ENCODE measurements at regions of chr6 and their contacts with region 1.

Region 1: GRCh38 chr6:26249957-26250697 is 114.9 kb upstream of the BTN3A2 start:
- DNase-seq: peak; percentile 81 to 84
- H3K4me3 ChIP-seq: peak overlapping the region; percentile 97
- H3K4me3 Mint-ChIP-seq: peak overlapping the region; percentile 71
- H3K27ac Mint-ChIP-seq: peak overlapping the region; percentile 71
- H3K4me1 ChIP-seq: peaks cover 10% of the 10 kb centered on the region; the same call in 1 of the 2 replicates
- H3K4me1 Mint-ChIP-seq: peaks cover 13% of the 10 kb centered on the region
- H3K27me3 ChIP-seq: no peaks in the 10 kb centered on the region
- H3K27me3 Mint-ChIP-seq: peaks cover 3% of the 10 kb centered on the region
- CTCF ChIP-seq: peak in 1 of 2 experiments; percentile 42

Region 2: GRCh38 chr6:26031595-26032339 is 218.4 kb before region 1 on chr6:
- CTCF ChIA-PET with region 1: no interaction called
- POLR2A ChIA-PET with region 1: interaction called, 15 read pairs
- intact Hi-C with region 1: no loop called
- DNase-seq: peak; percentile 95 to 96
- H3K4me3 ChIP-seq: peak overlapping the region; percentile 66
- H3K4me3 Mint-ChIP-seq: peak overlapping the region; percentile 87
- H3K27ac Mint-ChIP-seq: peak overlapping the region; percentile 100
- H3K4me1 ChIP-seq: peaks cover 9% of the 10 kb centered on the region
- H3K4me1 Mint-ChIP-seq: peaks cover 51% of the 10 kb centered on the region
- H3K27me3 ChIP-seq: no peaks in the 10 kb centered on the region
- H3K27me3 Mint-ChIP-seq: peaks cover 4% of the 10 kb centered on the region
- CTCF ChIP-seq: no peak

Region 3: GRCh38 chr6:26204332-26205165 is 45.6 kb before region 1 on chr6:
- CTCF ChIA-PET with region 1: no interaction called
- POLR2A ChIA-PET with region 1: interaction called, 14 read pairs
- intact Hi-C with region 1: loop called (anchors 2 kb)
- DNase-seq: peak; percentile 94 to 98
- H3K4me3 ChIP-seq: peak overlapping the region; percentile 90
- H3K4me3 Mint-ChIP-seq: no peak overlapping the region
- H3K27ac Mint-ChIP-seq: no peak overlapping the region
- H3K4me1 ChIP-seq: peaks cover 9% of the 10 kb centered on the region
- H3K4me1 Mint-ChIP-seq: peaks cover 4% of the 10 kb centered on the region
- H3K27me3 ChIP-seq: no peaks in the 10 kb centered on the region
- H3K27me3 Mint-ChIP-seq: peaks cover under 1% of the 10 kb centered on the region
- CTCF ChIP-seq: peak in 1 of 2 experiments; percentile 41

Region 4: DNA sequence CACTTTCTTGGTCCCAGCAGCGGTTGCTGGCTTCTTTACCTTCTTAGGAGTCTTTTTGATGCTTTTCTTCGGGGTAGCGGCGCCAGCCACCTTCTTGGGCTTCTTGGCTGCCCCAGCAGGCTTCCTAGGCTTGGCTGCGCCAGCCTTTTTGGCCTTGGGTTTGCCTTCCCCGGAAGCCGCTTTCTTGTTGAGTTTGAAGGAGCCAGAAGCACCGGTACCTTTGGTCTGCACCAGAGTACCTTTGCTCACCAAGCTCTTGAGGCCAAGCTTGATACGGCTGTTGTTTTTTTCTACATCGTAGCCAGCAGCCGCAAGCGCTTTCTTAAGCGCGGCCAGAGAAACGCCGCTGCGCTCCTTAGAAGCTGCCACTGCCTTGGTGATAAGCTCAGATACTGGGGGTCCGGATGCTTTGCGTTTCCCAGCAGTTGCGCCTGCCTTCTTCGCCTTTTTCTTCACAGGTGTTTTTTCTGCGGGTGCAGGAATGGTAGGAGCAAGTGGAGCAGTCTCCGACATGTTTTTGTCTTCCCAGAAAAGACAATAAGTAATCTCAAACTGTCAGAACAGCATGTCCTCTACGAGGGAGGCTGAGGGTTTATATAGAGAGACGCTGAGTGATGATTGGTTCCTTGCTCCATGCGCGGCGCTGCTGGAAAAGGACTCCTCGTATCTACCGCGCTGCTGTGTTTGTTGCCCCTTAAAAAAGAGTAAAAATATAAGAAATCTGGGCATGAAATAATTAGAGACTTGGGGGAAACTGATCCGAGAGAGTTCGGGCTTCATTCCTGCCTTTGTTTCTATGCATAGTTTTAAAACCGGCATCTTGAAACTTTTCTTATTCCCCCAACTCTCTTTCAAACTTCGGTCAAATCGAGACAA is 15.5 kb before region 1 on chr6:
- CTCF ChIA-PET with region 1: interaction called, 6 read pairs
- POLR2A ChIA-PET with region 1: interaction called, 77 read pairs
- intact Hi-C with region 1: loop called (anchors 1 kb)
- DNase-seq: peak; percentile 79 to 81
- H3K4me3 ChIP-seq: peak overlapping the region; percentile 52
- H3K4me3 Mint-ChIP-seq: peak overlapping the region; percentile 76
- H3K27ac Mint-ChIP-seq: peak overlapping the region; percentile 92
- H3K4me1 ChIP-seq: peaks cover 11% of the 10 kb centered on the region; the same call in 1 of the 2 replicates
- H3K4me1 Mint-ChIP-seq: no peaks in the 10 kb centered on the region
- H3K27me3 ChIP-seq: no peaks in the 10 kb centered on the region
- H3K27me3 Mint-ChIP-seq: no peaks in the 10 kb centered on the region
- CTCF ChIP-seq: no peak

Region 5: GRCh38 chr6:27479319-27480182 is 1229.4 kb after region 1 on chr6:
- CTCF ChIA-PET with region 1: no interaction called
- POLR2A ChIA-PET with region 1: no interaction called
- intact Hi-C with region 1: no loop called
- DNase-seq: peak; percentile 62 to 87
- H3K4me3 ChIP-seq: peak overlapping the region; percentile 52
- H3K4me3 Mint-ChIP-seq: no peak overlapping the region
- H3K27ac Mint-ChIP-seq: no peak overlapping the region
- H3K4me1 ChIP-seq: no peaks in the 10 kb centered on the region
- H3K4me1 Mint-ChIP-seq: no peaks in the 10 kb centered on the region
- H3K27me3 ChIP-seq: no peaks in the 10 kb centered on the region
- H3K27me3 Mint-ChIP-seq: no peaks in the 10 kb centered on the region
- CTCF ChIP-seq: no peak

Region 6: DNA sequence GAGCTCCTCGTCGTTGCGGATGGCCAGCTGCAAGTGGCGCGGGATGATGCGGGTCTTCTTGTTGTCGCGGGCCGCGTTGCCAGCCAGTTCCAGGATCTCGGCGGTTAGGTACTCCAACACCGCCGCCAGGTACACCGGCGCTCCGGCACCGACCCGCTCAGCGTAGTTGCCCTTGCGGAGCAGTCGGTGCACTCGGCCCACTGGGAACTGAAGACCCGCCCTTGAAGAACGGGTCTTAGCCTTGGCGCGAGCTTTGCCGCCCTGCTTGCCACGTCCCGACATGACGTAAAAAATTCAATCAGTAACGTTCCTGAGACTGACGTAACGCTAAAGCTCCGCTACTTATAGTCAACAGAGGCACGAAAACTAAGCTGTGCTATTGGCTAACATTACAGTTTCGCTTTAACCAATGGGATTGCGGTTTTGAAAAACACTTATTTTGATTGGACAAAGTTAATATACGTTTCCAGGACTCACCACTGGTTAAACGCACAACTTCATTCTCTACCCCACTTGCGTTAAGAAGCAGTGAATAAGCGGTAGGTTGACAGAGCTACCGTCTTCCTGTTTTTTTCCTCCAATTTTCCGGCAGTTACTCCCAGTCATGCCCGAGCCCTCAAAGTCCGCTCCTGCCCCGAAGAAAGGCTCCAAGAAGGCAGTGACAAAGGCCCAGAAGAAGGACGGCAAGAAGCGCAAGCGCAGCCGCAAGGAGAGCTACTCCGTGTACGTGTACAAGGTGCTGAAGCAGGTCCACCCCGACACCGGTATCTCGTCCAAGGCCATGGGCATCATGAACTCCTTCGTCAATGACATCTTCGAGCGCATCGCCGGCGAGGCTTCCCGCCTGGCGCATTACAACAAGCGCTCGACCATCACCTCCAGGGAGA is 1588.2 kb after region 1 on chr6:
- CTCF ChIA-PET with region 1: no interaction called
- POLR2A ChIA-PET with region 1: interaction called, 12 read pairs
- intact Hi-C with region 1: no loop called
- DNase-seq: peak; percentile 91 to 92
- H3K4me3 ChIP-seq: peak overlapping the region; percentile 77
- H3K4me3 Mint-ChIP-seq: no peak overlapping the region
- H3K27ac Mint-ChIP-seq: no peak overlapping the region
- H3K4me1 ChIP-seq: peaks cover 14% of the 10 kb centered on the region; the same call in 1 of the 2 replicates
- H3K4me1 Mint-ChIP-seq: peaks cover 21% of the 10 kb centered on the region
- H3K27me3 ChIP-seq: no peaks in the 10 kb centered on the region
- H3K27me3 Mint-ChIP-seq: no peaks in the 10 kb centered on the region
- CTCF ChIP-seq: no peak